ENCODE measurements at regions of chr13 and their contacts with region 1.

Region 1: GRCh38 chr13:32205431-32206096 is 109.6 kb downstream of the ZAR1L start:
- DNase-seq: no peak
- ATAC-seq: peak in 1 of 8 donors; percentile 18
- H3K4me3 ChIP-seq: no peak overlapping the region
- H3K27ac ChIP-seq: peak overlapping the region in 8 of 10 donors; percentile 6 to 63 (median 34)
- H3K4me1 ChIP-seq: peaks cover 0 to 67% (median 27%) of the 10 kb centered on the region in 9 donors
- H3K27me3 ChIP-seq: no peaks in the 10 kb centered on the region
- CTCF ChIP-seq: no peak

Region 2: DNA sequence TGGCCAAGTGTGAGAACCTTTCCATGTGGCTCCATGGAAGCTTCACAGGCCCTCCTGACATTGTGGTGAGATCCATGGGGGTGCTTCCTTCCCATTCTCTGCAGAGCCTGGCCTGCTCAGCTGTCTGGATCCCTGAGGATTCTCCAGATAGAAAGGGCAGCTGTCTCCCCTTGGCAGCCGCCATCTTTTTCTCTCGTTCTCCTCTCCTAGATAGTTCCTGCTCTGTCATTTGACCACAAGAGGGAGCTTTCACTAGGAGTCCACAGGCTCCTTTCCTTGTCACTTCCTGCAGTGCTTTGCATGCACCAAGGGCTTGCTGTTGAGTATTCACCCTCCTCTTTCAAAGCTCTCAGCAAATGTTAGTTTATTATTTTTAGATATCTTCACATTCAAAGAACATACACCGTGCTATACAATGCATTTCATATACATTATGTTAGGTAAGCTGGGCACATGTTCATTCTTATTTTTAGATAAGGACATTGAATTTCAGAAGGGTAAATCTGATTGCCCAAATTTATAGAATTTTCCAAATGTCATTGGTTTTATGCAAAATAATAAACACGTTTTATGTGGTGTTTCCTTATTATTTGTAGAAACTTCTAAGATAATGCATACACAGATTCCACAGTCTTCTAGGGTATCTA is 40.8 kb before region 1 on chr13:
- intact Hi-C with region 1: loop called in 1 of 10 experiments (anchors 5 kb)
- DNase-seq: no peak
- ATAC-seq: peak in 5 of 8 donors; percentile 19 to 48 (median 33)
- H3K4me3 ChIP-seq: no peak overlapping the region
- H3K27ac ChIP-seq: peak overlapping the region in 8 of 10 donors; percentile 24 to 85 (median 76)
- H3K4me1 ChIP-seq: peaks cover 7 to 90% (median 39%) of the 10 kb centered on the region in 9 donors
- H3K27me3 ChIP-seq: no peaks in the 10 kb centered on the region
- CTCF ChIP-seq: peak in 7 of 9 donors; percentile 41 to 61 (median 48)